ENCODE measurements at regions of chr12 and their contacts with region 1.

Region 1: DNA sequence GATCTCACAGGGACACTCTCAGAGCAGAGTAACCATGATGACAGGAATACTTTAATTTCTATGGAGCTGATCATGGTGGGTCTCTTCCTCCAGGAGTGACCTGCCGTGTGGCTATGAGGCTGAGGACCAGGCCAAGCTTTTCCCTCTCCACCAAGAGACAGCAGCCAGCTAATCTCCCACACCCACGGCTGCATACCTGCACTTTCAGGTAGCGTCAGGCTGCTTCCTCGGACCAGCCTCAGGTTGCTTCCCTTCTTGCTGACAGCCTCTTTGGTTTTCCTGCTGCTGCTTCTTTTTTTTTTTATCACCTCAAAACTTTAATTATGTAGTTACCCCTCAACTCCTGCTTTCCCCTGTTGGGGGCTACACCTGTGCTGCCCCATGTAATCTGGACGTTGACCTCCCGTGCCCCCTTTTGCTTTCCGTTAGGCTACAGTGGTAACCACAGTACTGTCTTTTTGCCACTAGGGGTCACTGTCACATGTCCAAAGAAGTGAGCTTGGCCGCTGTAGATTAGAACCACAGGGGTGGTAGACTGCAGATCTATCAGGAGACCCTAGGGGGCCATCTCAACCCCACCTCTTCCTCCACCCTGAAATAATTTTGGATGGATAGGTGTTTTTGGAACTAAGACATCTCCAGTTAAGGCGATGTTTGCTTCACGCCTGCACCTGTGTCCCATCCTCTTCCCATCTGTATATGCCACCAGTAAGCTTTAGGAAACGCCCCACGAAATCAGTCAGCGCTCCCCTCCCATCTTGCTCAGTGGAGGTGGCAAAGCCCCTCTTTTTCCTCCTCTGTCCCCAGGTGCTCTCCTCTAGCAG is 7.8 kb upstream of the PIP4K2C start:
- DNase-seq: peak in 1 of 2 donors; percentile 27
- ATAC-seq: peak; percentile 95 to 99 (median 97)
- H3K4me3 ChIP-seq: no peak overlapping the region
- H3K27ac ChIP-seq: no peak overlapping the region
- H3K4me1 ChIP-seq: no peaks in the 10 kb centered on the region
- H3K27me3 ChIP-seq: peaks cover 2 to 9% (median 4%) of the 10 kb centered on the region in 3 donors
- CTCF ChIP-seq: peak; percentile 94

Region 2: GRCh38 chr12:57621497-57622292 is 38.5 kb after region 1 on chr12:
- intact Hi-C with region 1: loop called (anchors 1 to 2 kb)
- DNase-seq: peak; percentile 64 to 81
- ATAC-seq: peak; percentile 78 to 85 (median 82)
- H3K4me3 ChIP-seq: peak overlapping the region; percentile 61
- H3K27ac ChIP-seq: no peak overlapping the region
- H3K4me1 ChIP-seq: peaks cover 7% of the 10 kb centered on the region
- H3K27me3 ChIP-seq: peaks cover 0 to 64% (median 12%) of the 10 kb centered on the region in 3 donors
- CTCF ChIP-seq: peak; percentile 91

Region 3: DNA sequence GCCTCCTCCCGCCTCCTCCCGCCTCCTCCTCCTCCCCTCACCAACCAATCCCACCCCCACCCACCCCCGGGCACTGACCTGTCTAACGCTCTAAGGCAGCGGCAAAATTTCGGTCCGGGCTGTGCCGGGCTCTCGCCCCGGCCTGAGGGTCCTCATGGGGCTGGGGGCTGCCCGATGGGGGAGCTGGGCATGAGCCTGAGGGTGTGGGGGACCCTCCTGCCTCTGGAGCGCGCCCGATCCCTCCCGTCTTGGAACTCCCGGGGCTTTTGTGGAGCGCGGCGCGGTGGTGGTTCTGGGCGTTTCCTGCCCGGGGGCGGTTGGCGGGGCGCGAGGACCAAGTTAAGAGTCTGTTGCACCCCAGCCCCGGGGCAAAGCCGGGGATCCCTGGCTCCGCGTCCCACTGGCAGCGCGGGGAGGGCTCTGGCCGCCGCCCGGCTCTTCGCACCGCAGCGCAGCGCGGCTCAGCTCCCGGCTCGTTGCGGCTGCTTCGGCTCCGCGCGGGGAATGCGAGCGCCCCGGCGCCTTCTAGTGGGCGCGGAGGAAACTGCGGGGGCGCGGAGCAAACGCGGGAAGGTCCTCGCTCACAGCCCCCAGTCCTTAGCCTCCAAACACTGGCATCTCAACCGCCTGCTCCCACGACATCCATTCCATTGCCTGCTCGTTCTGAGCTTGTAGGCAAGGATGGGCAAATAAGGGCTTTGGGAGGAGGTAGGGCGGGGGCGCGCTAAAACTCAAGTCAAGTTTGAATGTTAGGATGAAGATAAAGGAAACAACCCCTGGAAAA is 49.7 kb after region 1 on chr12 and contains the start of gene B4GALNT1:
- intact Hi-C with region 1: loop called in 1 of 2 experiments (anchors 2 kb)
- DNase-seq: peak; percentile 66 to 76
- ATAC-seq: peak; percentile 91 to 94 (median 93)
- H3K4me3 ChIP-seq: peak within 1 kb of the TSS; percentile 84
- H3K27ac ChIP-seq: peak within 1 kb of the TSS; percentile 48
- H3K4me1 ChIP-seq: peaks cover 8% of the 10 kb centered on the region
- H3K27me3 ChIP-seq: peaks cover 0 to 9% (median 7%) of the 10 kb centered on the region in 3 donors
- CTCF ChIP-seq: peak; percentile 94
- total RNA-seq, gene B4GALNT1: 9.1 to 26.6 (median 12.1) TPM

Region 4: DNA sequence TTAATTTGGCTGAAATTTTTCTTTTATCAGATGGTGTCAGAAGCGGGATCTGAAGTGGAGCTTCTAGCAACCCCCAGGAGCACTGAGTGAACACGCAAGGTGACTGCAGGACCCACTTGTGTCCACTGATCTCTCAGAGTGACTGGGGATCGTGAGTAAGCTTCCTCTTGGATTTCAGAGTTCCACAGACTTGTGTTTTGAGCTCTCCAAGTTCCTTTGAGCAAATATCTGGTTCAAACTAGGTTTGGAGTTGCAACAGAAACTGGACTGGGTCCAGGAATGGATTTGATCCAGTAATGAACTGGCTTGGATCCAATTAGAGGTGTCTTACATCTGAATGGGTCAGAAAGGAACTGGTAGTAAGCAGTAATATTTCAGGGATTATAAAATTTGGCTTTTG is 74.5 kb after region 1 on chr12:
- intact Hi-C with region 1: no loop called
- DNase-seq: no peak
- ATAC-seq: no peak
- H3K4me3 ChIP-seq: no peak overlapping the region
- H3K27ac ChIP-seq: no peak overlapping the region
- H3K4me1 ChIP-seq: no peaks in the 10 kb centered on the region
- H3K27me3 ChIP-seq: peaks cover 0 to 3% (median 0%) of the 10 kb centered on the region in 3 donors
- CTCF ChIP-seq: no peak